Right ventricle myocardium inferior (tissue), 1 donor: ENCODE measurements at regions of chr18 and their contacts with region 1.

Region 1: DNA sequence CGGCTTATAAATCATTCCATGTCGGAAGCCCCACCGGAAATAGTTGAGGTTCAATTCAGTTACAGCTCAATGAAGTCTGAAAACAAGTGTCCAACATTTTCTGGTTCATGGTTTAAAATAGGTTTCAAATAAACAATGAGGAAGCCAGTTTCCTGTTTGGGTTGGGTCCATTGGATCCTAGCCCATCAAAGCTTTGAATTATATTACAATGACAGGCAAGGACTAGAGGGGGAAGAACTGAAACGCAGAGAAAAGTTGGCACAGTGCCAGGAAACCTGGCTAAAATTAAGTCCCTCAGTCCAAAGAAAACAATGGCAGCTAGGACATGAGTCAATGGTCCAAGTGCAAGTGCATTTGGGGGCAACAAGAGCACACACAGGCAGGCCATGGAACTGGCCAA is 32.0 kb downstream of the SLC14A1 start:
- DNase-seq: no peak
- ATAC-seq: peak; percentile 84

Region 2: DNA sequence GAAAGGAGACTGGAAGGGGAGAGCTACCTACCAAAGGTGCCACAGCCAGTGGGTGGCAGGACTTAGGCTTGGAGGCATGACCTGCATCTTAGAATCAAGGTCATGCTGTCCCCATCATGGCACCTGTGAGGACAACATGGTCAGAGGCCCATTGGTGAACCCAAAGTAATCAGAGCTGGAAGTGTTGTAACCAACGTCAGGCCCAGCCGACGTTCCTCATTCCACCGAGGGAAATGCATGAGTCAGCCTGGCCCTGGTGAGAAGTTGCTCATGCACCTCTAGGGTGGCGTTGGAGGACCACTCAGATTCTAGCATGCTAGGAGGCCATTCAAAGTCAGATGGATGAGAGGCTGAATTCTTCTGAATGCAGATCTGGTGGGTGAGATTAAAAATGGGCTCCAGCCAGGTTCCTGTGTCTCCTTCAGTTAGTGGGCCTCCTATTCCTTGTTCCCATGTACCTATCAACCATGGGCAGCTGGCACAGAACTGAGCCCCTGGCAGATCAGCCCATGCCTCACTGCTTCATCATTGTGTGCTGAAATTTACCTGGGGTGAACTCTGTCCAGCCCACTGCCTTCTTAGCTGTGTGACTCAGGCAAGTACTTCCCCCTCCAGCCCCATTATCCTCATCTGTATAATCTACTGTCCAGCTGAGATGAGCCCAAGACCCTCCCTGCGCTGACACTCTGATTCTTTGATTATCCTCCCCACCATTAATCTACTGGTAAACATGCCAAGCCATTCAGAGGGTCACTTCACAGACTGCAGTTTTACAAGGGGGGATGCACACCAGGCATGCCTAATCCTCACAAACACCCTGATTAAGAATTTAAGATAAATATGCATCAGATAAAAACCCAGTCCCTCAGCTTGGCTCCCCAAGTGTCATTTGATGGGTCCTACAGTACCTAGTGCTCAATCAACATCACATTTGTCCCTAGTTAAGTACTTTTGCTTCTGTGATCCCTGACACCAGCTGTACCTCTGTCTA is 126.7 kb before region 1 on chr18:
- intact Hi-C with region 1: no loop called
- DNase-seq: no peak
- ATAC-seq: no peak

Region 3: DNA sequence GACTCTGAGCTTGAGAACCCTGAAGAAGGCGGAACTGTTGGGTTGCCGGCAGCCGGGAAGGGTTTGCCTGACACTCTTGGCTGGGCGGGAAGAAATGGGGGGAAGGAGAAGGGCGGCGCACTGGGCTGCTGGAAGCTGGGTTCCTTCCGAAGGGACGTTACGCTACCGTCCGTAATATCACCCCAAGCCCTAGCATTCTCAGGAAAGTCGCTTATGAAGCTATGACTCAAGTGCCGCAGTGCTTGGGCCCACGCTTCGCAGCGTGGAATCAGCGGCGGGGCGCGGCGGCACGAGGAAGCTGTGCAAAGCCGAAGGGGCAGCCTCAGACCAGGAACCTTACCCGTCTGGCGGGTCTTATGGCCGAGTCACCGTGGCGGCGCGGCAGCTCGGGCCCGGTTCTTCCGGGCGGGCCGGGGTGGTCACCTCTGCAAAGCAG is 19.3 kb after region 1 on chr18:
- intact Hi-C with region 1: loop called (anchors 1 kb)
- DNase-seq: peak; percentile 79
- ATAC-seq: peak; percentile 85